ENCODE measurements at regions of chr17 and their contacts with region 1.

Region 1: GRCh38 chr17:28842282-28843012 is at the start of gene FAM222B:
- DNase-seq: peak; percentile 54 to 92
- H3K4me3 ChIP-seq: peak within 1 kb of the TSS; percentile 85 to 98 (median 92)
- H3K27ac ChIP-seq: peak within 1 kb of the TSS; percentile 18; the same call in 1 of the 2 replicates
- H3K4me1 ChIP-seq: peaks cover 0 to 1% (median 0%) of the 10 kb centered on the region in 4 experiments; a peak in 1 of 7 replicates
- H3K27me3 ChIP-seq: no peaks in the 10 kb centered on the region
- CTCF ChIP-seq: no peak; a peak in 1 of 4 replicates
- EP300 ChIP-seq: no peak
- POLR2A ChIP-seq: peak in 1 of 2 experiments; percentile 50; a peak in 1 of 3 replicates
- RAD21 ChIP-seq: 0 out of 4 replicates have a peak, but pooled peaks of 1 of the 2 experiments have one; percentile 7
- total RNA-seq, gene FAM222B: 81.7 and 86.6 TPM in 2 replicates

Region 2: GRCh38 chr17:28750178-28751047 is 92.0 kb before region 1 on chr17:
- CTCF ChIA-PET with region 1: interaction called, 7 read pairs
- POLR2A ChIA-PET with region 1: interaction called, 12 read pairs
- DNase-seq: peak in 1 of 2 experiments; percentile 96
- H3K4me3 ChIP-seq: no peak overlapping the region
- H3K27ac ChIP-seq: no peak overlapping the region
- H3K4me1 ChIP-seq: peaks cover 0 to 30% (median 24%) of the 10 kb centered on the region in 4 experiments; a peak in 6 of 7 replicates
- H3K27me3 ChIP-seq: no peaks in the 10 kb centered on the region
- CTCF ChIP-seq: peak; percentile 98 to 100 (median 100)
- EP300 ChIP-seq: 0 out of 3 replicates have a peak, but pooled peaks of 1 of the 2 experiments have one; percentile 5
- POLR2A ChIP-seq: peak in 1 of 2 experiments; percentile 73; a peak in 2 of 3 replicates
- RAD21 ChIP-seq: peak; percentile 71 to 81

Region 3: GRCh38 chr17:28812091-28812747 is 30.2 kb before region 1 on chr17:
- CTCF ChIA-PET with region 1: interaction called, 4 read pairs
- POLR2A ChIA-PET with region 1: interaction called, 11 read pairs
- DNase-seq: peak; percentile 96
- H3K4me3 ChIP-seq: peak overlapping the region; percentile 79 to 92 (median 86)
- H3K27ac ChIP-seq: peak overlapping the region; percentile 90
- H3K4me1 ChIP-seq: peaks cover 3 to 10% (median 7%) of the 10 kb centered on the region in 4 experiments; a peak in 6 of 7 replicates
- H3K27me3 ChIP-seq: no peaks in the 10 kb centered on the region
- CTCF ChIP-seq: no peak
- EP300 ChIP-seq: peak in 1 of 2 experiments; percentile 35; a peak in 1 of 3 replicates
- POLR2A ChIP-seq: peak in 1 of 2 experiments; percentile 79; a peak in 2 of 3 replicates
- RAD21 ChIP-seq: peak in 1 of 2 experiments; percentile 13; a peak in 1 of 4 replicates

Region 4: GRCh38 chr17:28828294-28829040 is 14.0 kb before region 1 on chr17:
- CTCF ChIA-PET with region 1: interaction called, 5 read pairs
- POLR2A ChIA-PET with region 1: interaction called, 15 read pairs
- DNase-seq: no peak
- H3K4me3 ChIP-seq: no peak overlapping the region
- H3K27ac ChIP-seq: no peak overlapping the region
- H3K4me1 ChIP-seq: no peaks in the 10 kb centered on the region
- H3K27me3 ChIP-seq: no peaks in the 10 kb centered on the region
- CTCF ChIP-seq: no peak
- EP300 ChIP-seq: no peak
- POLR2A ChIP-seq: no peak
- RAD21 ChIP-seq: no peak

Region 5: DNA sequence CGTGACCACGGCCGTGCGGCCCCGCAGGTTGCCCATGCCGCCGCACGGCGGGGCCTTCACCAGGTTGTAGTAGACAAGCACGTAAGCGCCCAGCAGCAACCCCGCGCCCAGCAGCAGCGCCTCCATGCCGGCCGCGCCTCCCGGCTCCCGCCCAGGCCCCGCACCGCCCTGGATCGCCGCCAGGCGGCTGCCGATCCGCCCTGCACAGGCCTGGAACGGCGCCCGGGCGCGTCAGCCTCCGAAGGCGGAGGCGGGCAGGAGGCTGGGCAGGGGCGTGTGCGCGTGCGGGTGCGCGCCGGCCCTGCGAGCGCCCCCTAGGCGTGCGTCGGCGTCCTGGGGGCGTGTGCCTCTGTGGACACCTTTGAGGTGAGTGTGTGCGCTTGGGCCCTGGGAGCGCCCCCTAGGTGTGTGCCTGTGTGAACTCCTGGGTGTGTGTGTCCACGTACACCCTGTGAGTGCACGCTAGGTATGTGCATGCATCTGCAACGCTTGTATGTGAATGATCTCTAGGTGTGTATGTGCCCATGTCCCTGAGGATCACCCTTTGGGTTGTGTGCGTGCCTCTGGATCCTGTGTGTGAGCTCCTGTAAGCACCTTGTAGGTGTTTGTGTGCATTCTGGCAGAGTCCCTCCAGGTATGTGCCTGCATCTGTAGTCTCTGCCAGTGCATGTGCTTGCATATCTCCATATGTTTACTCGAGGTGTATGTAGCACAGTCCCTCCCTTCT is 60.5 kb after region 1 on chr17 and contains the start of gene DHRS13:
- CTCF ChIA-PET with region 1: interaction called, 10 read pairs
- POLR2A ChIA-PET with region 1: no interaction called
- DNase-seq: peak; percentile 87 to 97
- H3K4me3 ChIP-seq: peak within 1 kb of the TSS; percentile 52 to 85 (median 72)
- H3K27ac ChIP-seq: peak within 1 kb of the TSS; percentile 54
- H3K4me1 ChIP-seq: peaks cover 0 to 9% (median 5%) of the 10 kb centered on the region in 4 experiments; a peak in 5 of 7 replicates
- H3K27me3 ChIP-seq: no peaks in the 10 kb centered on the region
- CTCF ChIP-seq: peak; percentile 76 to 100 (median 99)
- EP300 ChIP-seq: peak in 1 of 2 experiments; percentile 65; a peak in 1 of 3 replicates
- POLR2A ChIP-seq: no peak
- RAD21 ChIP-seq: peak; percentile 23 to 64
- total RNA-seq, gene DHRS13: 22.1 and 23.7 TPM in 2 replicates

Measured in H1 (cell line).